CD4-positive, alpha-beta memory T cell (primary cell): ENCODE measurements at regions of chr6 and their contacts with region 1.

Region 1: GRCh38 chr6:20319520-20320357 is 81.9 kb upstream of the E2F3 start:
- DNase-seq: peak; percentile 77 to 86 (median 83)
- H3K4me3 ChIP-seq: peak overlapping the region; percentile 51 to 80
- H3K4me3 Mint-ChIP-seq: peak overlapping the region; percentile 87 to 96 (median 94)
- H3K27ac ChIP-seq: peak overlapping the region; percentile 68
- H3K27ac Mint-ChIP-seq: peak overlapping the region; percentile 88 to 98 (median 97)
- H3K4me1 ChIP-seq: peaks cover 16% of the 10 kb centered on the region
- H3K4me1 Mint-ChIP-seq: peaks cover 10 to 26% (median 19%) of the 10 kb centered on the region in 4 donors
- H3K27me3 ChIP-seq: no peaks in the 10 kb centered on the region
- H3K27me3 Mint-ChIP-seq: no peaks in the 10 kb centered on the region

Region 2: GRCh38 chr6:20212392-20213217 is 107.1 kb before region 1 on chr6 and contains the start of gene MBOAT1:
- CTCF ChIA-PET with region 1: no interaction called
- POLR2A ChIA-PET with region 1: interaction called, 24 read pairs
- intact Hi-C with region 1: no loop called
- DNase-seq: peak; percentile 60 to 76 (median 66)
- H3K4me3 ChIP-seq: peak within 1 kb of the TSS; percentile 59 to 89
- H3K4me3 Mint-ChIP-seq: peak within 1 kb of the TSS; percentile 97 to 99 (median 98)
- H3K27ac ChIP-seq: peak within 1 kb of the TSS; percentile 56
- H3K27ac Mint-ChIP-seq: peak within 1 kb of the TSS; percentile 93 to 96 (median 96)
- H3K4me1 ChIP-seq: peaks cover 43% of the 10 kb centered on the region
- H3K4me1 Mint-ChIP-seq: peaks cover 30 to 59% (median 37%) of the 10 kb centered on the region in 4 donors
- H3K27me3 ChIP-seq: no peaks in the 10 kb centered on the region
- H3K27me3 Mint-ChIP-seq: no peaks in the 10 kb centered on the region
- total RNA-seq, gene MBOAT1: 21.3 to 24.6 TPM

Region 3: DNA sequence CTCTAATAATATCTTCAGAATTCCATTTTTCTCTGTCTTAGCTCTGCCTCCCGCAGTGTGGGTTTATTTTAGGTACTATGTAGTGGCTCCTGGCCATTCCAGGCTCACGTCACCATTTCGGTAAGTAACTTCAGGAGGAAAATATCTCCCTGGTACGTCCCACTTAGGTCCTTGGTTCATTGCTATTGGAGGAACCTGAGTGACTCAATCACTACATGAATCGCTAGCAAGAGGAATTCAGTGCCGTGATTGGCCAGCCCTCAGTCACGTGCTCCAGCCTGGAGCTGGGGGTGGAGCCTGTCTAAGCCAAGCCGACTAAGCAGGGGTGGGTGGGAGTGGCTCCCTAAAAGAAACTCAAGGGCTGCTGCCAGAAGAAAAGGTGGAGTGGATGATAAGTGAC is 14.6 kb after region 1 on chr6:
- CTCF ChIA-PET with region 1: interaction called, 24 read pairs
- POLR2A ChIA-PET with region 1: interaction called, 94 read pairs
- intact Hi-C with region 1: loop called (anchors 1 kb)
- DNase-seq: no peak
- H3K4me3 ChIP-seq: no peak overlapping the region
- H3K4me3 Mint-ChIP-seq: no peak overlapping the region
- H3K27ac ChIP-seq: no peak overlapping the region
- H3K27ac Mint-ChIP-seq: no peak overlapping the region
- H3K4me1 ChIP-seq: peaks cover 21% of the 10 kb centered on the region
- H3K4me1 Mint-ChIP-seq: peaks cover 17 to 22% (median 19%) of the 10 kb centered on the region in 4 donors
- H3K27me3 ChIP-seq: no peaks in the 10 kb centered on the region
- H3K27me3 Mint-ChIP-seq: no peaks in the 10 kb centered on the region

Region 4: GRCh38 chr6:20366091-20366832 is 46.5 kb after region 1 on chr6:
- CTCF ChIA-PET with region 1: interaction called, 42 read pairs
- POLR2A ChIA-PET with region 1: interaction called, 363 read pairs
- intact Hi-C with region 1: loop called (anchors 1 kb)
- DNase-seq: peak; percentile 37 to 48 (median 44)
- H3K4me3 ChIP-seq: peak overlapping the region; percentile 6 to 21
- H3K4me3 Mint-ChIP-seq: peak overlapping the region; percentile 64 to 91 (median 82)
- H3K27ac ChIP-seq: peak overlapping the region; percentile 42
- H3K27ac Mint-ChIP-seq: peak overlapping the region; percentile 86 to 97 (median 92)
- H3K4me1 ChIP-seq: peaks cover 61% of the 10 kb centered on the region
- H3K4me1 Mint-ChIP-seq: peaks cover 47 to 67% (median 57%) of the 10 kb centered on the region in 4 donors
- H3K27me3 ChIP-seq: no peaks in the 10 kb centered on the region
- H3K27me3 Mint-ChIP-seq: no peaks in the 10 kb centered on the region

Region 5: DNA sequence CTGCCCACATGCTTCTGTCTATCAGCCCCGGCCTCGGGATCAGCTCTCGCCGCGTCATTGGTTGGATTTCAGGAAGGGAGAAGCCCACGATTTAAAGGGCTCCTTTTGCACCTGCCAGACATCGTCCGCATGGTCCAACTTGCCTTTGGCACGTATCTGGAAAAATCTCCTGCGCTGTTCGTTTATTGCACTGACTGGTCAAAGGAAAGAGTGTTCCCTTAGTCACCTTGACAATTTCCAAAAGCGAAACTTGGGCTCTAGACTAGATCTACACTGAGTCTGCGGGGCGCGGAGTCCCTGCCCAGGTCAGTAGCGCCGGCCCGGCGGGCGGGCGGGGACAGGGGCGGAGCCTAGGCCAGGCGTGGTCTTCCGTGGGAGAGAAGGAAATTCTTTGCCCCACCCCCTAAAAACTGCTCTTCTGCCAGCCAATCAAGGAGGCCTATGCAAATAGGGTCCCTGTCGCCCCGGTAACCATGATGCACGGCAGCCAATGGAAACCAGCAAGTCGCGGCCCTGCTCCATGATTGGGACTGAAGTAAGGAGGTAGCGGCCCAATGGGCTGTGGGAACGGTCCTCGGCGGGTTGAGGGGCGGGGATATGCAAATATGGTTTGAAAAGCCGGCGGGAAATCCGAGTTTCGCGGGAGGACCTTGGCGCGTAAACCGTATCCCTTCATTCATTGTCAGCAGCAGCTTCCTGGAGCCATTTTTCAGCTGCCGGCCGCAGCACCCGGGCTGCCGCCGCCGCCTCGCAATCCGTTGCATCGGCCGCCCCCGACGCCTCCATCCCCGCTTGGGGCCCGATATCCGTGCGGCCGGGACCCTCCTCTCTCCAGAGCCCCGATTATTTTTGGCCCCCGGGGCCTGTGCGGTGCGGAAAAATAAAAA is 81.7 kb after region 1 on chr6 and contains the start of gene E2F3:
- CTCF ChIA-PET with region 1: interaction called, 60 read pairs
- POLR2A ChIA-PET with region 1: interaction called, 179 read pairs
- intact Hi-C with region 1: loop called (anchors 1 kb)
- DNase-seq: peak; percentile 97 to 100 (median 99)
- H3K4me3 ChIP-seq: peak within 1 kb of the TSS; percentile 19 to 72
- H3K4me3 Mint-ChIP-seq: peak within 1 kb of the TSS; percentile 89 to 97 (median 92)
- H3K27ac ChIP-seq: peak within 1 kb of the TSS; percentile 73
- H3K27ac Mint-ChIP-seq: peak within 1 kb of the TSS; percentile 85 to 97 (median 92)
- H3K4me1 ChIP-seq: peaks cover 27% of the 10 kb centered on the region
- H3K4me1 Mint-ChIP-seq: peaks cover 20 to 37% (median 28%) of the 10 kb centered on the region in 4 donors
- H3K27me3 ChIP-seq: no peaks in the 10 kb centered on the region
- H3K27me3 Mint-ChIP-seq: no peaks in the 10 kb centered on the region
- total RNA-seq, gene E2F3: 25.2 to 25.5 TPM

Region 6: DNA sequence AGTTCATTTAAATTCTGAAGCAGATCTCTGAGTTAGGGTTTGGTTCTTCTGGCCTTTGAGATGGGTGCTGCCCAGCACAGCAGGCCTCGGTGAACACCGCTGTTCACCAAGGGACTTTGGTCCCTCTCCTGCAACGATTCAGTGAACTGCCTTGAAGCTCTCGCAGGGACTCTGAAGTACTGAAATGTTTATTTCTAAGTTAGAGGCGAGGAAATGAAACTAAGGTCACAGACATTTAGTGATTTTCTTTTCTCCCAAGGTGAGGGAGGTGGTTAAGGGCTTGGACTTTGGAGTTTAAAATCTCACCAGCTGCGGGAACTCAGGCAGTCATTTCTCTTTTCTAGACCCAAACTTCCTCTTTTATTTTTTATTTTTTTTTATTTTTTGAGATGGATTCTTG is 108.1 kb after region 1 on chr6:
- CTCF ChIA-PET with region 1: no interaction called
- POLR2A ChIA-PET with region 1: interaction called, 11 read pairs
- intact Hi-C with region 1: no loop called
- DNase-seq: no peak
- H3K4me3 ChIP-seq: no peak overlapping the region
- H3K4me3 Mint-ChIP-seq: no peak overlapping the region
- H3K27ac ChIP-seq: no peak overlapping the region
- H3K27ac Mint-ChIP-seq: peak overlapping the region in 1 of 7 donors; percentile 35
- H3K4me1 ChIP-seq: peaks cover 25% of the 10 kb centered on the region
- H3K4me1 Mint-ChIP-seq: peaks cover 15 to 27% (median 19%) of the 10 kb centered on the region in 4 donors
- H3K27me3 ChIP-seq: no peaks in the 10 kb centered on the region
- H3K27me3 Mint-ChIP-seq: no peaks in the 10 kb centered on the region